PC-9 (cell line): ENCODE measurements at regions of chr1 and their contacts with region 1.

Region 1: GRCh38 chr1:209860293-209860881 is 32.6 kb downstream of the UTP25 start:
- DNase-seq: peak; percentile 58 to 69
- H3K4me3 ChIP-seq: no peak overlapping the region
- H3K27ac ChIP-seq: no peak overlapping the region
- H3K4me1 ChIP-seq: peaks cover 11% of the 10 kb centered on the region
- H3K27me3 ChIP-seq: no peaks in the 10 kb centered on the region
- CTCF ChIP-seq: peak; percentile 94

Region 2: GRCh38 chr1:209674957-209675564 is 185.3 kb before region 1 on chr1 and contains the start of gene G0S2:
- CTCF ChIA-PET with region 1: interaction called, 16 read pairs
- POLR2A ChIA-PET with region 1: no interaction called
- intact Hi-C with region 1: no loop called
- DNase-seq: peak; percentile 58 to 69
- H3K4me3 ChIP-seq: peak within 1 kb of the TSS; percentile 66
- H3K27ac ChIP-seq: peak within 1 kb of the TSS; percentile 81
- H3K4me1 ChIP-seq: peaks cover 52% of the 10 kb centered on the region
- H3K27me3 ChIP-seq: no peaks in the 10 kb centered on the region
- CTCF ChIP-seq: no peak
- total RNA-seq, gene G0S2: 2.4 and 4.9 TPM in 2 replicates

Region 3: GRCh38 chr1:209989525-209989924 is 129.1 kb after region 1 on chr1:
- CTCF ChIA-PET with region 1: interaction called, 4 read pairs
- POLR2A ChIA-PET with region 1: no interaction called
- intact Hi-C with region 1: loop called (anchors 1 kb)
- DNase-seq: no peak
- H3K4me3 ChIP-seq: no peak overlapping the region
- H3K27ac ChIP-seq: peak overlapping the region; percentile 63
- H3K4me1 ChIP-seq: peaks cover 15% of the 10 kb centered on the region
- H3K27me3 ChIP-seq: no peaks in the 10 kb centered on the region
- CTCF ChIP-seq: peak; percentile 69; the same call in 1 of the 2 replicates

Region 4: GRCh38 chr1:210143465-210144062 is 283.2 kb after region 1 on chr1:
- CTCF ChIA-PET with region 1: no interaction called
- POLR2A ChIA-PET with region 1: no interaction called
- intact Hi-C with region 1: loop called (anchors 2 kb)
- DNase-seq: peak; percentile 41 to 74
- H3K4me3 ChIP-seq: no peak overlapping the region
- H3K27ac ChIP-seq: no peak overlapping the region
- H3K4me1 ChIP-seq: no peaks in the 10 kb centered on the region; the same call in 1 of the 2 replicates
- H3K27me3 ChIP-seq: no peaks in the 10 kb centered on the region
- CTCF ChIP-seq: peak; percentile 91

Region 5: DNA sequence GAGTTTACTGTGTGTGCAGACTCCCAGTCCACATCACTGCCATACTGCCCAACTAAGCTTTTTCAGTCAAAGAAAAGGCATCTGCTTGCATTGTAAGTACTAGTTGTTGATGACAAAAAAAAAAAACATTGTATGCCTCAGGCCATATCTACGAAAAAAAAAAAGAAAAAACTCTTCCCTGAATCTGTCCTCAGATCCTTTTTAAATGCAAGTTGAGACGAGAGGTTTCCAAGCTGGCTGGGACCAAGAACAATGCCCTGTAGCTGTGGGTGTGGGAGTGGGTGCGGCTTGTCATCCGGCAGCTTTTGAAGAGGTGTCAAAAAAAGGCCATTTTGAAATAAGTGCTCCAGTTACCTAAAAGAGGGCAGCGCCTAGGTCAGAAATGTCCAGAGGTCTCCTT is 439.1 kb after region 1 on chr1:
- CTCF ChIA-PET with region 1: interaction called, 12 read pairs
- POLR2A ChIA-PET with region 1: no interaction called
- intact Hi-C with region 1: no loop called
- DNase-seq: peak in 1 of 2 experiments; percentile 51
- H3K4me3 ChIP-seq: no peak overlapping the region
- H3K27ac ChIP-seq: no peak overlapping the region
- H3K4me1 ChIP-seq: 0 out of 2 replicates have a peak, but pooled peaks cover 4% of the 10 kb centered on the region
- H3K27me3 ChIP-seq: no peaks in the 10 kb centered on the region
- CTCF ChIP-seq: no peak